Natural killer cell (primary cell): ENCODE measurements at regions of chr9 and their contacts with region 1.

Region 1: DNA sequence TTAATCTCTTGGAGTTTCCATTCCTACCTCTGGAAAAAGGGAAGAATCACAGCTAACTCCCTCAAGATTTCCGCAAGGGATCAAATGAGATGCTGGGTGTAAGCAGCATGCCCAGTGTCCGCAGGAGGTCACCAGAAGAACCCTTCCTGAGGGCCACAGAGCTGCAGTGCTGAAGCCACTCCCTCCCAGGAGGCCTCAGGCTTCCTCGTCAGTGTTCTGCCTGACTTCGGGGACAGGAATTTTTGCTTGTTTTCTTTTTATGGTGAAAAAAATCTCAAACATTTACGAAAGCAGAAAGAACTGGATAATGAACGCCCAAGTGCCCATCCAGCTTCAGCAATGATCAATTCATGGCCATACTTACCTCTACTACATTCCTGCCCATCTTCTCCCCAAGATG is 183.0 kb downstream of the CDK5RAP2 start:
- DNase-seq: no peak
- ATAC-seq: no peak
- H3K4me3 ChIP-seq: no peak overlapping the region
- H3K4me3 Mint-ChIP-seq: peak overlapping the region; percentile 35
- H3K27ac ChIP-seq: no peak overlapping the region
- H3K27ac Mint-ChIP-seq: peak overlapping the region in 1 of 2 donors; percentile 37
- H3K4me1 ChIP-seq: peaks cover 26% of the 10 kb centered on the region
- H3K4me1 Mint-ChIP-seq: peaks cover 29 to 43% of the 10 kb centered on the region in 2 donors
- H3K27me3 ChIP-seq: no peaks in the 10 kb centered on the region
- H3K27me3 Mint-ChIP-seq: no peaks in the 10 kb centered on the region
- CTCF ChIP-seq: no peak

Region 2: GRCh38 chr9:120436983-120437475 is 40.1 kb after region 1 on chr9:
- intact Hi-C with region 1: loop called (anchors 2 kb)
- DNase-seq: no peak
- ATAC-seq: peak; percentile 31 to 84 (median 79)
- H3K4me3 ChIP-seq: no peak overlapping the region
- H3K4me3 Mint-ChIP-seq: peak overlapping the region; percentile 78
- H3K27ac ChIP-seq: no peak overlapping the region
- H3K27ac Mint-ChIP-seq: peak overlapping the region; percentile 45 to 64
- H3K4me1 ChIP-seq: peaks cover 10% of the 10 kb centered on the region
- H3K4me1 Mint-ChIP-seq: peaks cover 40 to 47% of the 10 kb centered on the region in 2 donors
- H3K27me3 ChIP-seq: no peaks in the 10 kb centered on the region
- H3K27me3 Mint-ChIP-seq: no peaks in the 10 kb centered on the region
- CTCF ChIP-seq: no peak